Activated naive CD4-positive, alpha-beta T cell treated with anti-CD3 and anti-CD28 coated beads for 36 hours (primary cell): ENCODE measurements at regions of chr22 and their contacts with region 1.

Region 1: DNA sequence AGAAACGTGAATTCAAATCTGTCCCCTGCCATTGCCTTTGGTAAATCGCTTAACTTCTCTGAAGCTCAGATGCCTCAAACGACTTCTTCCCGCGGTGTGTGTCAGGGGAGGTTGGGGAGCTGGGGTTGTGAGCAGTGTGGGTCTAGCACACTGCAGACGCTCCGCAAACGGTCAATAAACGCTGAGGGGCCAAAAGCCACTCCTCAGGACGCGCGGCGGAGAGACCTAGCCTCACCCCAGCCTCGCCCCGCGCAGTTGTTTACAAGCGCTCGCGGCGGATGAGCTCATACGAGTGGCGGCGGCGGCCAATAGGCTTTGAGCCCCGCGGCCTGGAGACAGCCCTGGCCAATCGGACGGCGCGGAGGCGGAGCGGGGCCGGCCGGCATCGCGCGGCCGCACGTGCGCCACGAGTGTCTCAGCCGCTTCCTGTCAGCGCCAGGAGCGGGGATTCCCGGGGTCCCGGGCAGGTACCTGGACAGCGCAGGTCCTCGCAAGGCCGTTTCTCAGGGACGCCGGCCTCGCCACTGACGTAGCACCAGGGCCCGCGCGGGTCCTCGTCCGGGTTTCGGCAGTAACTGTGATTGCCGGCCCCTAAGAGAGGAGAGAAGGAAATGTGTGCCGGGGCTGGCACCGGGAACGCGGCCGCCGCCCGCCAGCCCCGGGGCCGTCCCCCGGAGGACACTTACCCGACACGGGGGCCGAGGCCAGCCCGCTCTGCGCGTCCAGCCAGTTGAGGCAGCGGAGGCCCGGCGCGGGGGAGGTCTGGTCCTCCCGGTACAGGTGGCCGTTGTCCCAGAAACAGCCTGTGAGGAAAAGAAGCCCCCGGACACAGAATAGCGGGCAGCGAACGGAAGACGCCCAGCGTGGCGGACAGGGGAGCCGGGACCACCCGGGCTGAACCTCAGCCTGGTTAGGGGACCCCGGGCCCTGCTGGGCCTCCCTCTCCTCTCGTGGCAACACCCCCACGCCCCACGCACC is 1.5 kb downstream of the PIK3IP1 start:
- DNase-seq: peak; percentile 96
- H3K4me3 Mint-ChIP-seq: peak overlapping the region; percentile 98
- H3K27ac Mint-ChIP-seq: peak overlapping the region; percentile 100
- H3K4me1 Mint-ChIP-seq: peaks cover 65% of the 10 kb centered on the region
- H3K27me3 Mint-ChIP-seq: no peaks in the 10 kb centered on the region

Region 2: DNA sequence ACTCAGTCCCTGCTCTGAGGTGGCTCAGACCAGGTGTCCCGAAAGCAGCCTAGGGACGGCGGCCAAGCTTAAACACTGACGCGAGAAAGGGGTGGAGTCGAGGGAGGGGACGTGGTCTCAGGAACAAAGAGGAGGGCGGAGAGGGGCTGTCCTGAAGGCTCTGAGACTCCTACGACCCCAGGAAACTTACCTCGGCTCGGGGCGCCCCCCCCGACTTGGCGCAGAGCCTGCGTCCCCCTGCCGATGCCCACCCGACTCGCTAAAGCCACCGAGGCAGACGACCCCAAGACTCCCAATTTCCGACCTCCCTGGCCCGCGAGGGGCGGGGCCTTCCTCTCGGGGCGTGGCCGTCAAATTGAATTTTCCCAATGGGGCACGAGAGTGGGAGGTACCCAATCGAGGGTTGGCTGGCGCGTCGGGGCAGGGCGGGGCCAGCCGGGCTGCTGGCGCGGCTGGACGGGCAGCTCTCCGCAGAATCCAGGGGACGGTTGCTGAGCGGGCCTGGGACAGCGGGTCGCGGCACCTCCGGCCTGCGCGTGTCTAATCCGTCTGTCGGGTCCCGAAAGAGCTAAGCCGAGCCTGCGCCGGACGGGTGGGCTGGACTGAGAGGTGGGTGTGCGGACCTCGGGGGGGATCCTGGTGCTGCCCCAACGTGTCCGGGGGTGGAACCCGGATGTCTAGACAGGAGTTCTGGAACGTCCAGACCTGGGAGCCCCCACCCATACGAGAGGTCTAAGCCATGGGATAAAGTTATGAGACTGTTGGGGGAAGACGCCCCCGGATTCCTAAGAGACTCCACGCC is 209.7 kb before region 1 on chr22 and contains the start of gene SMTN:
- CTCF ChIA-PET with region 1: no interaction called
- intact Hi-C with region 1: loop called (anchors 5 kb)
- DNase-seq: peak; percentile 91
- H3K4me3 Mint-ChIP-seq: peak within 1 kb of the TSS; percentile 79
- H3K27ac Mint-ChIP-seq: peak within 1 kb of the TSS; percentile 18
- H3K4me1 Mint-ChIP-seq: peaks cover 32% of the 10 kb centered on the region
- H3K27me3 Mint-ChIP-seq: no peaks in the 10 kb centered on the region
- total RNA-seq, gene SMTN: 46.2 to 47.6 TPM

Region 3: DNA sequence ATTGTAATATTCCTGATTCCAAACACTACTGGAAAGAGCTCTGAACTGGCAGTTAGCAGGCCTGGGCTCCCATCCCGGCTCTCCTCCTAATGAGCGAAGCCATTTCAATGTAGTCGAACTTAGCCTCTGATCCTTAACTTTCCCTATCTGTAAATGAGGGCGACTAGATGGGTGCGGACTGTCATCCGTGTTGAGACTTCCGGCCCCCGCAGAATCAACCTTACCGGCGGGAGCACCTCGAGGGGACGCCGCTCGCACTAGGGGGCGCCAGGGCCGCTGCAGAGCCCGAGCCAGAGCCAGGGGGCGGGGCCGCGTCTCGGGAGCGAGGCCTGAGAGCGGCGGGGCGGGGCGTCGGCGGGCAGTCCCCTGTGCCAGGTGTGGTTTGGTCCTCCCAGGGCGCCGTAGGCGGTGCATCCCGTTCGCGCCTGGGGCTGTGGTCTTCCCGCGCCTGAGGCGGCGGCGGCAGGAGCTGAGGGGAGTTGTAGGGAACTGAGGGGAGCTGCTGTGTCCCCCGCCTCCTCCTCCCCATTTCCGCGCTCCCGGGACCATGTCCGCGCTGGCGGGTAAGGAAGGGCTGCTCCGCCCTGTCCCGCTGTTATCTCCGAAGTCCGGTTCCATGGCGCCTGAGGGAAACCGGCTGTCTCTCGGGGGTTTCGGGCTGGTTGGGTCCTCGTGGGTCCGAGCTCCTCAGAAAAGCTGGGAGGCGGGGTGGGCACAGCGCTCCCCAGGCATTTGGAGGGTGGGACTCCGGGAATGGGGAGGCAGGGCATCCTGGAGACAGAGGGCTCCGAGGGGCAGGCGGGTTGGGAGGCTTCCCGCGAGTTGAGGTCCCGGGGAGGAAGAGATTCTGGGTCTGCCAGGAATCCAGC is 78.7 kb before region 1 on chr22 and contains the start of gene LIMK2:
- CTCF ChIA-PET with region 1: interaction called, 13 read pairs
- intact Hi-C with region 1: loop called (anchors 1 kb)
- DNase-seq: peak; percentile 98
- H3K4me3 Mint-ChIP-seq: peak within 1 kb of the TSS; percentile 82
- H3K27ac Mint-ChIP-seq: peak within 1 kb of the TSS; percentile 79
- H3K4me1 Mint-ChIP-seq: peaks cover 41% of the 10 kb centered on the region
- H3K27me3 Mint-ChIP-seq: no peaks in the 10 kb centered on the region
- total RNA-seq, gene LIMK2: 50.8 to 50.9 TPM

Region 4: DNA sequence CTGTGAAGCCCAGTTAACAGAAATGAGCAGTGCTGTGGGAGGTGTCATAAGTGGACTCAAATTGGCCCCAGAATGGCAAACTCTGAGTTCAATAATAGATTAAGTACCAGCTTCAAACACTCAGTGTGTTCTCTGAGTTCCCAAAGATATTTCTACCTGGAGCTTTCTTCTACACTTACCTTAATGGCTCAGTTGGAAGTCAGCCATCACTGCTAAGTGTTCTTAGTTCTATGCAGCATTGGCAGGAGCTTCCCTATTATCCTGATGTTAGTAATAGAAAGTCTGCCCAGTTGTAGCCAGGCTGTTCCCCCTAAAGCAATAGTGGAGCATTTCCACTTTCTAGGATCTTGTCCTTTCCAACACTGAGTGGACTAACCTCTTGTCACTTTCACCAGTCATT is 11.2 kb after region 1 on chr22:
- CTCF ChIA-PET with region 1: interaction called, 14 read pairs
- intact Hi-C with region 1: no loop called
- DNase-seq: no peak
- H3K4me3 Mint-ChIP-seq: no peak overlapping the region
- H3K27ac Mint-ChIP-seq: no peak overlapping the region
- H3K4me1 Mint-ChIP-seq: peaks cover 32% of the 10 kb centered on the region
- H3K27me3 Mint-ChIP-seq: no peaks in the 10 kb centered on the region

Region 5: GRCh38 chr22:31345331-31346254 is 54.8 kb after region 1 on chr22:
- CTCF ChIA-PET with region 1: interaction called, 7 read pairs
- intact Hi-C with region 1: loop called (anchors 2 kb)
- DNase-seq: peak; percentile 86
- H3K4me3 Mint-ChIP-seq: peak overlapping the region; percentile 90
- H3K27ac Mint-ChIP-seq: peak overlapping the region; percentile 94
- H3K4me1 Mint-ChIP-seq: peaks cover 42% of the 10 kb centered on the region
- H3K27me3 Mint-ChIP-seq: no peaks in the 10 kb centered on the region

Region 6: DNA sequence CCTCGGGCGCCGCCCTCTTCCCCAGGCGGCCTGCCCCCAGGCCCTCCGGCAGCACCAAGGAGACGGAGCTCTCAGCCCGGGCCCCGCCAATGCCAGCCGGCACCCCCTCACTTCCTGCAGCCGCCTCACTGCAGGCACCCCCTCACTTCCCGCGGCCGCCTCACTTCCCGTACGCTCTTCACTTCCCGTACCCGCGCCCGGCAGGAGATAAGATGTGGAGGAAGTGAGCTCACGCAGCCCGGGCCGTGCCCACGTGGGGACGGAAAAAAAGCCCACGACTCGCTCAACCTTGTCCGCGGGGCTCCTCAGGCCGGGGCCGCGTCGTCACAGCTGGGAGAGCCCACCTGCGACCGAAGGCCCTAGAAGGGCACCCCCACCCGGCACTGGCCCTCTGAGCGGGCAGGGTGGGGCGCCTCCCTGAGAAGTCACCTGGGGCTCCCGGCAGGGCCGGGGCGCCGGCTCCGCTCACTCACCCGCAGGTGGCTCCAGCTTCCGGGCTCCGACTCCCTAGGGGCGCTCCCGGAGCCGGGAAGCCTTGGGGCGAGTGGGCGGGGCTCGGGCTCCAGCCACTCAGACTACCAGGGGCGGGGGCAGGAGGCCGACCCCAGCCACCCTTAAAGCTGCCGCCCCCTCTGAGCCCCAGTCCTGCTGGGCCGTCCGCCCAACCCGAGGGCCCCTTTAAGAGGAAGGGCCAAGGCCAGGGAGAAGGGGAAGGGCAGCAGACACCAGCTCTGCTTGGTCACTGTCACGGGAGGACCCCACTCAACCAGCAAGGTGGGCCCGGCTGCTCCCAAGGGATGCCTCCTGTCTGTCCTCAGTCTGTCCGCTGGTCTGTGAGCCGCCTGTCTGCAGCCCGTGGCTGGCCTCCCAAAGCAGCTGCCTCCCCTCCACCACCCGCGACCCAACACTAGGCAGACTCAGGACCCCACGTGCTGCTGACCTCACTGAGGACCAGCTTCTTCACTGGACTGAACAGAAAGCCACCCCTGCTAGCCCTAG is 339.8 kb after region 1 on chr22:
- CTCF ChIA-PET with region 1: no interaction called
- intact Hi-C with region 1: loop called (anchors 5 kb)
- DNase-seq: peak; percentile 91
- H3K4me3 Mint-ChIP-seq: peak overlapping the region; percentile 84
- H3K27ac Mint-ChIP-seq: peak overlapping the region; percentile 94
- H3K4me1 Mint-ChIP-seq: peaks cover 56% of the 10 kb centered on the region
- H3K27me3 Mint-ChIP-seq: no peaks in the 10 kb centered on the region